Vagina (tissue), 2 donors: ENCODE measurements at regions of chr18 and their contacts with region 1.

Region 1: GRCh38 chr18:49431165-49431962 is 29.1 kb downstream of the DYM start:
- DNase-seq: no peak
- H3K4me3 ChIP-seq: no peak overlapping the region
- H3K27ac ChIP-seq: no peak overlapping the region
- H3K4me1 ChIP-seq: peaks cover 6% of the 10 kb centered on the region
- H3K27me3 ChIP-seq: no peaks in the 10 kb centered on the region
- CTCF ChIP-seq: no peak
- POLR2A ChIP-seq: no peak

Region 2: DNA sequence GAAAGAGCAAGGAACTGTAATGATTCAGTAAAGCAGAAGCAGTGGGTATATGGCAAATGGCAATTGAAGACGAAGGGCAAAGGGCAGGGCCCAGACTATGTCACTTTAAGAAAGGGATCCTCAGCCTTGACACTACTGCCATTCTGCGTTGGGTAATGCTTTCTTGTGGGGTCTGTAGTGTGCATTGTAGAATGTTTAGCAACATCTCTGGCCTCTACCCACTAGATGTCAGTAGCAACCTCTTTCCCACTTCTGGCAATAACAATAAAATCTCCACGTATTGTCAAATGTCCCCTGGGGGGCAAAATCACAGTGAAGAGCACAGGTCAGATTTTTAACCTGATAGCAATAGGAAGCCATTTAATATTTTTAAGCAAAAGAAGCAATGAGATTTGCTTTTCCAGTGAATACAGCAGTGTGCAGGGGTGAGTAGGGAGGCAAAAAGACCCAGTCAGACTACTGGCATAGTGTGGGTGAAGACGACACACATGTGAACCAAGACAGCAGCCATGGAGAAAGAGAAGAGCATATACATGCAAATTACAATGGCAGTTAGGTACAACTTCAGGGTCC is 180.5 kb before region 1 on chr18:
- intact Hi-C with region 1: loop called (anchors 10 kb)
- DNase-seq: no peak
- H3K4me3 ChIP-seq: no peak overlapping the region
- H3K27ac ChIP-seq: no peak overlapping the region
- H3K4me1 ChIP-seq: no peaks in the 10 kb centered on the region
- H3K27me3 ChIP-seq: no peaks in the 10 kb centered on the region
- CTCF ChIP-seq: no peak
- POLR2A ChIP-seq: no peak